HepG2 (cell line): ENCODE measurements at regions of chr9 and their contacts with region 1.

Region 1: DNA sequence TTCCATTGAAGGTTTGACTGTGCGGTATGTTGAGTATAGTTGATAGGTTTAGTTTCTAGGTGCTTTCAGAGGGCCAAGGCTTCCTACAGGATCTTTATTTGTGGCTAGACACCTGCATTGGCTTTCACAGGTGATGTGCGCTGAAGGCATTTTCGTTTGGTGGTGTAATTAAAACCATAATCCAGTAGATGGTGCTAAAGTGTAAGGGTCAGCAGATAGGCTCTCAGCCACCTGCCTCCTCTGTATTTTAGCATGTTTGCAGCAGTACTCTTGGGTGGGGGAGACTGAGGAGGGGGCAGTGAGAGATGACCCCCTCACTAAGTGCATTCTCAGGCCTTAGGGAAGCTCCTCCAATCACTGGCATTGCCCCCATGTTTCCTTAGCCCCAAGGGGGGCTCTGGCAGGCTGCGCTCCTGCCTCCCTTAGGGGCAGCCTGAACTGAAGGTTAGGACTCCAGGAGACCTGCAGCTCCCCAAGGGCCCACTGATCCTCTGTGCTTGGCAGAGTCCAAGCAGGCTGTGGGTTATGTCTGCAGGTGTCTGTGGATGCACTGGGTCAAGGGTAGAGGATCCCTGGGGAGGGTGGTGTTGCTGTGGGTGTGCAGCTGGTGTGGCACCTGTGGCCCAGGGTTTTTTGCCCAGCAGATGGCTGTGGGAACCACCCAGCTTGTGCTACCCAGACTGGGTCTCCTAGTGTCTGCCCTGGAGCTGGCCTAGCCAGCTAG is 23.4 kb downstream of the CDK20 start:
- DNase-seq: peak; percentile 22
- ATAC-seq: peak; percentile 70
- H3K4me3 ChIP-seq: no peak overlapping the region
- H3K27ac ChIP-seq: no peak overlapping the region
- H3K4me1 ChIP-seq: no peaks in the 10 kb centered on the region
- H3K27me3 ChIP-seq: no peaks in the 10 kb centered on the region
- CTCF ChIP-seq: peak; percentile 81
- EP300 ChIP-seq: no peak
- POLR2A ChIP-seq: no peak
- RAD21 ChIP-seq: peak; percentile 62; the same call in 1 of the 2 replicates

Region 2: DNA sequence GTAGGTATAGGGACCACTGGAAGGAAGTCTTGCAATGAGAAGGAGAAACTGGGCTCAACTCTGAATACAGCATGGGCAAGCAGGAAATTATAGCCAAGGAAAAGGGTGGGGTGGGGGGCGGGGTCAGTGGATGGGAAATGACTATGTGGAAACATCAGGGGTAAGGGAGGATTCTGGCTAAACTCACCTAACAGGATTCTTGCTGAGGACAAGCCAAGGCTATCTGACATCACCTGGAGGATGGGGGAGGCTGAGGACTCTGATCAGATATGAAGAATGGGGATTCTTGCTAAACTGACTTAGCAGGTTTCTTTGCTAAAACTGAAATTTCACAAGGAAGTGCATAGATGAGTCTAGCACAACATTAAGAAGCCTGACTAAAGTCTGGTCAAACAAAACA is 184.2 kb before region 1 on chr9:
- CTCF ChIA-PET with region 1: no interaction called
- POLR2A ChIA-PET with region 1: no interaction called
- in situ Hi-C with region 1: no loop called
- intact Hi-C with region 1: no loop called
- DNase-seq: no peak
- ATAC-seq: no peak
- H3K4me3 ChIP-seq: no peak overlapping the region
- H3K27ac ChIP-seq: no peak overlapping the region
- H3K4me1 ChIP-seq: no peaks in the 10 kb centered on the region
- H3K27me3 ChIP-seq: 0 out of 5 replicates have a peak, but pooled peaks cover 0 to under 1% of the 10 kb centered on the region in 2 experiments
- CTCF ChIP-seq: no peak
- EP300 ChIP-seq: no peak
- POLR2A ChIP-seq: no peak
- RAD21 ChIP-seq: no peak

Region 3: DNA sequence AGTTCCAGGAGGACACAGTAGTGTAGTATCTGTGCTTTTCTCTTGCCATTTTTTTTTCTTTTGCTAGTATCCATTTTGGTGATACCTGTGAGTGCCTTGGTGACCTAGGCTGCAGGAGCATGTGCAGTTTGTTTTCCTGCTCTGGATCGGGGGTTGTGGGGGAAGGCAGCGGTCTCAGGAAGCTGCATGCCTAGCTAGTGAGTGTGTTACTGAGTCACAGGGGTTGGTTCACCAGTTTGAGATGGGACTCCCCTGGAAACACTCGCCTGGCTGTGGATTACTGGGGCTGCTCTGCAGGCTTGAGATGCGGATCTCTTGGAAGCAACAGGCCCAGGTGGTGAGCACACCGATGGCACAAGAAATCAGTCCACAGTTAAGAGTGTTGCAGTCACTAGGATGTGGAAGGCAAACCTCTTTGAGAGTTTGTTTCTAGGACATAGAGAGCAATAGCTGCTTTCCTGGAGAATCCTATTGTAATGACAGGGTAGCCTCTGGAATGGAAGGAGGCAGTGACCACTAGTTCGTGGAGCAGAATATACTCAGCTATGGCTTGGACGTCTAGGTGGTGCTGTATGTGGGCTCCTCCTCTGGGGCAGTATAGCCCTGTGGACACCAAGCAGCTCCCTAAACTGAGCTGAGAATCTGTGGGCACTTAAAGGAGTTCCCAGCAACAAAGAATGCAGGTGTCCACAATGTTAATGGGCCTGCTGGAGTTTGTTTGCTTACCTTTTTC is 88.2 kb before region 1 on chr9:
- CTCF ChIA-PET with region 1: no interaction called
- POLR2A ChIA-PET with region 1: no interaction called
- in situ Hi-C with region 1: no loop called
- intact Hi-C with region 1: no loop called
- DNase-seq: no peak
- ATAC-seq: no peak
- H3K4me3 ChIP-seq: no peak overlapping the region
- H3K27ac ChIP-seq: no peak overlapping the region
- H3K4me1 ChIP-seq: no peaks in the 10 kb centered on the region
- H3K27me3 ChIP-seq: no peaks in the 10 kb centered on the region
- CTCF ChIP-seq: no peak
- EP300 ChIP-seq: no peak
- POLR2A ChIP-seq: no peak
- RAD21 ChIP-seq: no peak

Region 4: DNA sequence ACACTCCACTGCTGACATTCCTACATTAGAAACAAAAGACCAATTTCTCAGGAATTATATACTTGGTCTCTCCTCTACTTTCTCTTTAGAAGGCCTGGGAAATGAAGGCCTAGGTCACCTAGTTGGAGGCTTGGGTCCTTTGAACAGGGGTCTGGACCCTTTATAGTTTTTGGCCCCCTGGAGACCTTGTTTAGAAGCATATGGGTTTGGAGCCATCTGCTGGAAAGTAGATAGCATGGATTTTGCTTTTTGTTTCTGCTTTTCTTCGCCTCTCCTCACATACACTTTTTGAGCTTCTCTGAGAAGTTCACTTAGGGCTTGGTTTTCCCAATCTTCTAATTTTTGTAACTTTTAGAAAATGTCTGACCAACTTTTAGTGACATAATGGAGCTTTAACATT is 90.5 kb after region 1 on chr9:
- CTCF ChIA-PET with region 1: interaction called, 5 read pairs
- POLR2A ChIA-PET with region 1: no interaction called
- in situ Hi-C with region 1: no loop called
- intact Hi-C with region 1: loop called (anchors 5 kb)
- DNase-seq: peak; percentile 4
- ATAC-seq: no peak
- H3K4me3 ChIP-seq: no peak overlapping the region
- H3K27ac ChIP-seq: no peak overlapping the region
- H3K4me1 ChIP-seq: no peaks in the 10 kb centered on the region
- H3K27me3 ChIP-seq: no peaks in the 10 kb centered on the region
- CTCF ChIP-seq: peak; percentile 39; the same call in 1 of the 2 replicates
- EP300 ChIP-seq: no peak
- POLR2A ChIP-seq: no peak
- RAD21 ChIP-seq: no peak